ENCODE measurements at regions of chr1 and their contacts with region 1.

Region 1: DNA sequence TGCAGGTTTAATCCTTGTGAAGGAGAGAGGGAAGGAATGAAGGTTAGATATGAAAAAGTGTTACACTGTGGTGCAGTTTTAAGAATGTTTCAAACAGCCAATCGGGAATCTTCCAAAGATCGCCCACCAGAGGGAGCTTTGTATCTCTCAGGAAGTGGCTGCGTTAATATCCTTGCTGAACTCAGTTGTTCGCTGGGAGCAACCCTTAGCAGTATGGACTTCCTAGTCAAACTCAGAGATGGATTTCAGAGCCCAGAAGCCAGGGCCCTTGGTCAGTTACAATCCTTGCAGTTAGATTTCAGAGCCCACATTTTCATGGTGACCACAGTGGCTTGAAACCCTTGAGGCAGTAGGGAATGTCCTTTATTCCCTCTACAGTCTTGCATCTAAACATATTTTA is 136.2 kb downstream of the NTNG1 start:
- DNase-seq: peak; percentile 43
- H3K4me3 ChIP-seq: no peak overlapping the region
- H3K27ac ChIP-seq: no peak overlapping the region
- H3K4me1 ChIP-seq: peaks cover 4% of the 10 kb centered on the region
- H3K27me3 ChIP-seq: no peaks in the 10 kb centered on the region
- CTCF ChIP-seq: peak; percentile 36 to 58

Region 2: DNA sequence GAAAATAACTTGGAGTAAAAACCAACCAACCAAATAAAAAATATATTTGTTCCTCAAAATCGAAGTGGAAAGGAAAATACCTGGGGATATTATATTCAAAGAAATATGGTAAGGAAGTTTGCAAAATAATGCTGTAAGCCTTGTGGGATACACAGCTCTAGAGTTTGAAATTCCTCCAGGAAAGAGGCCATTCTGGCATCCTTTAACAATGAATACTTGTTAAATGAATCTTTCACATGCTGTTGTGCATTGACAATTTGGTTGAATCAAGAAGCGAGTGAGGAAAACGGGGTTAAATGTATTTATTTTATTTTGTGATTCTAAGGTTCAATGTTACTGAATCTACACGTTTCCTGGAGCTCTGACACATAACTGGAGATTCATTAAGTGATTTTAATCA is 166.7 kb before region 1 on chr1:
- CTCF ChIA-PET with region 1: no interaction called
- dilution Hi-C with region 1: no loop called
- in situ Hi-C with region 1: no loop called
- intact Hi-C with region 1: no loop called
- DNase-seq: no peak
- H3K4me3 ChIP-seq: no peak overlapping the region
- H3K27ac ChIP-seq: no peak overlapping the region
- H3K4me1 ChIP-seq: no peaks in the 10 kb centered on the region
- H3K27me3 ChIP-seq: no peaks in the 10 kb centered on the region
- CTCF ChIP-seq: no peak

Region 3: GRCh38 chr1:107430540-107431228 is 153.7 kb after region 1 on chr1:
- CTCF ChIA-PET with region 1: no interaction called
- dilution Hi-C with region 1: no loop called
- in situ Hi-C with region 1: no loop called
- intact Hi-C with region 1: loop called (anchors 2 kb)
- DNase-seq: peak; percentile 24
- H3K4me3 ChIP-seq: no peak overlapping the region
- H3K27ac ChIP-seq: no peak overlapping the region
- H3K4me1 ChIP-seq: no peaks in the 10 kb centered on the region
- H3K27me3 ChIP-seq: no peaks in the 10 kb centered on the region
- CTCF ChIP-seq: peak; percentile 84

Measured in mammary epithelial cell (primary cell).